PC-3 (cell line): ENCODE measurements at regions of chr7 and their contacts with region 1.

Region 1: GRCh38 chr7:17370092-17370491 is 71.6 kb downstream of the AHR start:
- DNase-seq: peak; percentile 76
- ATAC-seq: no peak
- H3K4me3 ChIP-seq: no peak overlapping the region
- H3K27ac ChIP-seq: peak overlapping the region; percentile 93
- H3K4me1 ChIP-seq: peaks cover 39% of the 10 kb centered on the region
- H3K27me3 ChIP-seq: no peaks in the 10 kb centered on the region
- CTCF ChIP-seq: no peak

Region 2: DNA sequence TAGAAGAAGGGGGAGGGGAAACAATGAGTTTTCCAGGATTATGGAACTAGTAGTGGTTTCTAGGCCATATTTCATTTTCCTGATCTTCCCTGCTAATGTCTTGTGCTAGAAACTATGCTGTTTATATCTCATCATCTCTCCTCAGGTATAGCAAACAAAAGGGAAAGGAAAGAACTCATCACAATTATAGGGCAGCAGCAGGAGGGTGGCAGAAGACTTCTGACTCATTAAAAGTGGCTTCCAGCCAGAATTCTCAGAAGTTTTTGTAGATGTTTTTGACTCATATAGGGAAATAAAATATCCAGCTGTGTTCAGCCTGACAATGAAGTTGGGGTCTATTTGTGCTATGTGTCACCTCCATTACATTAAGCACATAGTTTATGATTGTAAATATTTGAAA is 65.2 kb before region 1 on chr7:
- CTCF ChIA-PET with region 1: no interaction called
- POLR2A ChIA-PET with region 1: no interaction called
- intact Hi-C with region 1: loop called (anchors 1 kb)
- DNase-seq: peak; percentile 97
- ATAC-seq: peak; percentile 84
- H3K4me3 ChIP-seq: peak overlapping the region; percentile 55
- H3K27ac ChIP-seq: peak overlapping the region; percentile 73
- H3K4me1 ChIP-seq: peaks cover 50% of the 10 kb centered on the region
- H3K27me3 ChIP-seq: no peaks in the 10 kb centered on the region
- CTCF ChIP-seq: no peak

Region 3: DNA sequence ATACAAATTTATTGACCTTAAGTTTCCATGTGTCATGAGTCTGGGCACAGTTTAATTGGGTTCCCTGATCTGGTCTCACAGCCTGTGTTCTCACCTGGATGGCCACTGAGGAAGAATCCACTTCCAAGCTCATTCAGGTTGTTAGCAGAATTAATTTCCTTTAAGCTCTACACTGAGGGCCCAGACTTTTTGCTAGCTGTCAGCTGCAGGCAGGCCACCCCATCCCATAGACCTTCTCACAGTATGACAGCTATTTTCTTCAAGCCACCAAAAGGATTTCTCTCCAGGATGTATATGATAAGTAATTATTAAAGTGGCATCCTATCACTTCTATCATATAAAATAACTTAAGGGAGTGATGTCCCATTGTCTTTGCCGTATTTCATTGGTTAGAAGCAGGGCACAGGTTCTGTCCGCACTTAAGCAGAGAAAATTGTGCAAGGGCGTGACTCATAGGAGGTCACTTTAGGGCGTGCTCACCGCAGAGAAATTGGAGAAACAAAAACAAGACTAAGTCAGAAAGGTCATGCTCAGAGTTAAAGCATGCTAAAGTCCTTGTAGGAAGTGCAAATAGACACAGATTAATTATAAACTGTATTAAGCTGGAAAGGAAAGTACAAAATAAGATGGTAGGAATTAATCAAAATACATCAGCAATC is 38.3 kb after region 1 on chr7:
- CTCF ChIA-PET with region 1: no interaction called
- POLR2A ChIA-PET with region 1: interaction called, 3 read pairs
- intact Hi-C with region 1: loop called (anchors 2 kb)
- DNase-seq: peak; percentile 91
- ATAC-seq: peak; percentile 92
- H3K4me3 ChIP-seq: no peak overlapping the region
- H3K27ac ChIP-seq: peak overlapping the region; percentile 68
- H3K4me1 ChIP-seq: peaks cover 50% of the 10 kb centered on the region
- H3K27me3 ChIP-seq: no peaks in the 10 kb centered on the region
- CTCF ChIP-seq: no peak

Region 4: DNA sequence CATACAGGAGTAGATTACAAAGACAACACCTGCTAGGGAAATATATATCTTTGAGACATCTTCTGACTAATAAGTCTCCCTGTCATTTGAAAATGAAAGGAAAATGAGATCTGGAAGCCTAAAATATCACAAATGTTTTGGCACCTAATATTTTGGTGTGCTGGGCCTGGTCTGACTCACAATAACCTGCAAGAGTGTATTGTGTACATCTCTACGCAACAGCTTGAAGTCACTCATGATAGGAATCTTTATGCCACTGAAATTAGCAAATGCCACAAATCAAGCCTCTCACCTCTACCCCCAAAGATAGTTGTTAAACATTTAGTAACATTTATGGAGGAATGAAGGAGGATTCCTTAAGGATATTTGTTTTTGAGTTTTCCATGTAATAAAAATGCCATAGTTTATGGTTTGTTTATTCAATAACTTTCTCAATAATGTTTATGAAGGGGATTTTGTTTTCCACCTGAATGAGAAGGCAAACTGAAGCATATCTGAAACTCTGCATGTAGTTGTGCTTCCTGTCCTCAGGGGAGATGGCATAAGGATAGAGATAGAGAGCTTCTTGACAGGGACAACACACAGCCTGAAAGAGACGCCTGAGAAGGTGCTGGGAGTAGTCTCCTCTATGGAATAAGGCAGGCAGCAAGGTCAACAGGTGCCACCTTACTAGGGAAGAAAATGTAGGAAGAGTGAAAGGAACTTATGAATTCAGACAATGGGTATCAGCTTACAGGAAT is 125.7 kb after region 1 on chr7:
- CTCF ChIA-PET with region 1: no interaction called
- POLR2A ChIA-PET with region 1: interaction called, 6 read pairs
- intact Hi-C with region 1: loop called (anchors 5 kb)
- DNase-seq: peak; percentile 54
- ATAC-seq: peak; percentile 86
- H3K4me3 ChIP-seq: no peak overlapping the region
- H3K27ac ChIP-seq: peak overlapping the region; percentile 36
- H3K4me1 ChIP-seq: peaks cover 15% of the 10 kb centered on the region
- H3K27me3 ChIP-seq: no peaks in the 10 kb centered on the region
- CTCF ChIP-seq: no peak

Region 5: DNA sequence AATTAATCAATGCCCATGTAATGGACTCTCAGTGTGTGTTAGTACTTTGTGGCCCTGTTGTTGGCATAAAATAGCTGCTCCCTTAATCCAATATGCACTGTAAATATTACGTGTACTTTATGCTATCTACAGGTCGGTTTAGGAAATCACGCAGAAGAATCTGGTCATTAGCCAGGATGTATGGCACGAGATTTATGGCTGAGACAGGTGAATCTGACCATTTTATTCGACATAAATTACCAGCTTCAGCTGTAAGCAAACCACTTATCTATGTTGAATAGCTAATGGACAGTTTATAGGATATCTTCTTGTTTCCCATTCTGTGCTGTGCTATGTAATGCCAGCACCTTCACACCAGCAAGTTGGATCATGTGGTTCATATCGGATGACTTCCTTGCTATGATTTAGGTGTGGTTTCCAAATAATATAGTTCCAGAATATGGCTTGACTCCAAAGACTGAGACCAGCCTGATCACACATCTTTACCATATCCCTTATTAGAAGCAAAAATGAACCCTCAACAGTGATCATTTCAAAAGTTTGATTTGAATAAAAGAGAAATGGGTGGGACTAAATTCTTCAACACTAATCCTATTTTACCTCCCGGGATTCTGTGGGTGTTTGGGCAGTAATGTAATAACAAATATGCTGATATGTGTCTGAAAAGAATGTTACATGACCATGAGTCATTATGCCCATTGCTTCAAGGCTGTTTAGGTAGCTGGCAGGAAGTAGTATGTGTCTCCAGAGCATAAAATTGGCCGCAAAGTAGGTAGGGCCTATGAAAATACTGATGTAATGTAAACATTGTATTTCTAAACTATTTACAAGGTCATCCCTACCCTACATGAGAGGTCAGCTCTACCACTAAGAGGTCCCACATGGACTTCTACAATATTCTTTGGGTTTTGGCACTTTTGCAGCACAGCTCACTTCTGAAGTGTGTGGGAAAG is 229.9 kb after region 1 on chr7:
- CTCF ChIA-PET with region 1: no interaction called
- POLR2A ChIA-PET with region 1: no interaction called
- intact Hi-C with region 1: no loop called
- DNase-seq: peak; percentile 95
- ATAC-seq: peak; percentile 81
- H3K4me3 ChIP-seq: peak overlapping the region; percentile 36; the same call in 1 of the 2 replicates
- H3K27ac ChIP-seq: peak overlapping the region; percentile 95
- H3K4me1 ChIP-seq: peaks cover 42% of the 10 kb centered on the region
- H3K27me3 ChIP-seq: no peaks in the 10 kb centered on the region
- CTCF ChIP-seq: no peak